ENCODE measurements at regions of chr18 and their contacts with region 1.

Region 1: DNA sequence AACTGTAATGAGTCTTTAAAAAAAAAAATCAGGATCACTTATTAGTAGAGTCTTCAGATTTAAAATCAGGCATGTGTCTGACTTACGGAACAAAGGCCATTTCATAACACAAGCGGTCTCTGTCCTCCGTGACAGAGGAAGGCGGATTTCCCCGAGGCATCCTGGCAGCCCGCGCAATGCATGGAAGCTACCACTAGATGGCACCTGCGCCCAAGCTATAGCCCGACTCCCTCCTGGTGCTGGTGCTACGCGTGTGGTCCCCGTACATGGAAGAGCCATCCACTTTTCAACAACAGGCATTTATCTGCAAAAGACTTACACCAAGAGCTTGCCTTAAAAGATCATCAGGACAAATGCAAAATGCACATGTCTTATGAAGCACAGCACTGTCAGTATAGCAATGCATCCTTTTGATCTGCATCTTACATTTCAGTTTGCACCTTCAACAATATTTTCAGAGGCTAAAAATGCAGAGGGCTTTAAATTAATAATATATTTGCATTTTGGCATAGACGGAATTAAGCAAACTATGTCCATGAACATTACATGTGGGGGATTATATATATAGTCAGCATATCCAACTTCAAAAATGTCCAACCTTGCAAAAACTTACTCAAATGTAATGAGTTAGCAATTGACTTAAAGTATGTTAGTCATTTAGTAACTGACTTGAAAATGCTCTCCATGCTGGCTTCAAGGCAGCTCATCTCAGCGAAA is 96.0 kb downstream of the ZNF516 start:
- DNase-seq: peak; percentile 24
- H3K4me3 ChIP-seq: no peak overlapping the region
- CTCF ChIP-seq: peak; percentile 99

Region 2: GRCh38 chr18:76274468-76275289 is 124.4 kb before region 1 on chr18:
- CTCF ChIA-PET with region 1: no interaction called
- POLR2A ChIA-PET with region 1: no interaction called
- DNase-seq: no peak
- H3K4me3 ChIP-seq: no peak overlapping the region
- CTCF ChIP-seq: peak; percentile 5

Region 3: DNA sequence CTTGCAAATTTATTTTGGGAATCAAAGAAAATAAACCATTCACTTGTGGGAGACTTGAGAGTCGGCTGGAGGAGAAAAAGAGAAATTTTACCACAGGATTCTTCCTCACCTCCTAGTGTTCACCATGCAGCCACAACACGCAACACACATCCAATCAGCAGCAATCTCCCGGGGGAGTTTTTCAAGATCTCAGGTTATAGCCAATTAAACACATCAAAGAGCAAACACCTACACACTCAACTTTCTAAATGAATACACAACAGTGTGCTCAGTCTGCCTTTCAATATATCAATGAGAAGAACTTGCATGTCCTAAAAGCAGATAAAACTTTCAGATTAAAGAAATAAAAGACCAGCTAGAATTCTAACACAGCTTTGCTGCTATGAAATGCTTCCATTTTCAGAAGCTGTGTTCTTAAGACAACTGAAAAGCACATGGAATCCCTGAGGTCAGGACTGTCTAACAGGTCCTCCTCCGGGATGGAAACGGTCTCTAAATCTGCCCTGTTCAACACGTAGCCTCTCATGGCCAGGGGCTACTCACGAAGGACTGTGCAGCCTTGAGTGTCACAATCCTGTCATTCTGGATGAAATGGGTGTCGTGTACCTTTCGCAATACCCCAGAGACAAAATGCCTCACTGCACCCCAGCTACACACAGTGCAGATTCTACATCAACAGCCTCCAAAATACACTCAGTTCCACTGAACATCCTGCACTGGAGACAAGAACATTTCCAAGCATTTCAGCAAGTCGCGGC is 11.8 kb after region 1 on chr18:
- CTCF ChIA-PET with region 1: interaction called, 37 read pairs
- POLR2A ChIA-PET with region 1: interaction called, 3 read pairs
- DNase-seq: no peak
- H3K4me3 ChIP-seq: no peak overlapping the region
- CTCF ChIP-seq: no peak

Region 4: DNA sequence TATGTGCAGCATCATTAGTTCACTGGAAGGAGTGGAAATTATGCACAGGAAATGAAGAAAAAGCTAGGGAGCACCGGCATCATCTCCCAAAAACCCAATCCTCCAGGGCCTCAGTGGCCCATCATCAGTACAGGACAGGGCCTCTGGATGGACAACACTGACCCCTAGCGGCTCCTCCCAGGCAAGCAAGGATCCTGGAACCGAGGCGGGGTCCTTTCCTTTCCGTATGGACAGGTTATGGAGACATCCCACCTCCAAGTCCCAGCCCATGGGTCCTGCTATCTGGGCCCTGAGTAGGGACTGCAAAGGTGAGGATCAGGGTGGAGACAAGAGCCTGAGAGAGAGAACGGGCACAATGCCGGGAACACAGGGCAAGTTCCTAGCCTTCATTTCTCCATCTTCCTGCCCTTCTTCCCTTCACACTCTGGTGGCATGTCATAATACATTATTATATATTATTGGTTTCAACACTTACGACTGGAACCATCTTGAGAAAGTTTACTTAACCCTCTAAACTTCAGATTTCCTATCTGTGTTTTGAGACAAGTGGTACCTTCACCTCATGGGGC is 27.8 kb after region 1 on chr18:
- CTCF ChIA-PET with region 1: interaction called, 15 read pairs
- POLR2A ChIA-PET with region 1: no interaction called
- DNase-seq: no peak
- H3K4me3 ChIP-seq: no peak overlapping the region
- CTCF ChIP-seq: peak; percentile 82

Region 5: DNA sequence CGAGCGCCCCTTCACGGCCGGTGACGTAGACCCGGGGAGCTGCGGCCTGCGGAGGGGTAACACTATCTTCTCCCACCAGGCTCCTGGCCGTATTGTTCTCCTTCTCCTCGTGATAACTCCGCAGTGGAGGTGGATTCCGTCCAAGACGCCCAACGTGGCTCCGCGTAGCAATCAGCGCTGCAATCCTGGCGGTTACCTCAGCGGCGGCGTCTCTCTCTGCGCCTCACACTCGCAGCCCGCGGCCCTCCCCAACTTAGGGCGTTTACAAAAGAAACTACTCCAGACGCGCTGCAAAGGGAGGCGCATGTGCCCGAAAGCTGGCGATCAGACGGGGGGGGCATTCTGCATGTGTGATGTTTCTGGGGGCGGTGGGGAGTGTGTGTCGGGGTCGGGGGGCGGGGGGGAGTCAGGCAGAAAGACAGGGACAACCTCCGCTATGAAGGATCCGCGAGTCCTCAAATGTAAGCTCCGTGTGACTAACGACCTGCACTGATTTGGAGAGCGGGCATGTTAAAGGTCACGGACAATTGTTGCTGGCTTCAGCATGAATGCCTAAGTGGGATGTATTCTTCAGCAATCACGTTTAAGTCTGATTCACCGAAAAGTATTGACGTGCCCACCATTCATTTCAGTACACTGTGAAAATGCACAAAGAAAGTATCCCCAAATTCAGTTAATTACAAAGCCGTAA is 97.3 kb after region 1 on chr18:
- CTCF ChIA-PET with region 1: interaction called, 13 read pairs
- POLR2A ChIA-PET with region 1: no interaction called
- DNase-seq: no peak
- H3K4me3 ChIP-seq: peak overlapping the region; percentile 78
- CTCF ChIP-seq: no peak

Region 6: DNA sequence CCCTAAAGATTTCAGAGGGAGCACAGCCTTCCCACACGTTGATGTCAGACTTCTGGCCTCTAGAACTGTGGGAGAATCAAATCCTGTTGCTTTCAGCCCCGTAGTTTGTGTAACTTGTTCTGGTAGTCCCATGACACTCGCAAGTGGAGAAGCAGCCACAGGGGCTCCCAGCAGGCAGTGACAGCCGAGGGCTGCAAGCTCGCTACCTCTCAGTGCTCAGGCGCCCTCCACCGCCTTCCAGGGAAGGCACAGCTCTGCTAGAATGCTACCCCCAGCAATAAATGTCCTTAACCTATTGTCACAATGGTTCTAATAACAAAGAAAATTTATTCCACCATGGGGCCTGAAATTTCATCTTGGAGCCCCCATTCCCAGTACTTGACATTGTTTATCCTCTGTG is 280.2 kb after region 1 on chr18:
- CTCF ChIA-PET with region 1: interaction called, 139 read pairs
- POLR2A ChIA-PET with region 1: no interaction called
- DNase-seq: no peak
- H3K4me3 ChIP-seq: no peak overlapping the region
- CTCF ChIP-seq: no peak

Region 7: DNA sequence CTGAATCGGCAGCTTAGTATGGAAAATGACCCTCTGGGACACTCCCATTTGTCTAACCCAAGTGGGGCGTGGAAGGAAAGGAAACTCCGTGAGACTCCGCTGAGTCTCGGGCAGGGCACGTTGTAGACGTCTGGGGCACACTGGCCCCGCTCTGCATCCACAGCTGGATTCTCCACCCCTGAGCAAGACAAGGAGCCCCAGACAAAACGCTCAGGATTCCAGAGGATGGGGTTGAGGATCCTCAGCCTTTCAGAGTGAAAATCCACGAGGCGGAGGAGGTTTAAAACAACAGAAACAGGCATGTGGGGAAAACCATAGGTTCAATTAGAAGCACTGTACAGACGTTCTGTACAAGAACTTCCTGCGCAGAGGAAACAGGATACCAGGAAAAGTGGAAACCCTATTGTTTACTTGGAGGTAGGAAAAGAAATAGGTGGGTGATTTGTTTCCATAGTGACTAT is 298.4 kb after region 1 on chr18:
- CTCF ChIA-PET with region 1: interaction called, 28 read pairs
- POLR2A ChIA-PET with region 1: no interaction called
- DNase-seq: no peak
- H3K4me3 ChIP-seq: peak overlapping the region; percentile 27
- CTCF ChIP-seq: no peak

Region 8: GRCh38 chr18:76953583-76954233 is 554.7 kb after region 1 on chr18:
- CTCF ChIA-PET with region 1: no interaction called
- POLR2A ChIA-PET with region 1: no interaction called
- DNase-seq: no peak
- H3K4me3 ChIP-seq: no peak overlapping the region
- CTCF ChIP-seq: no peak